Heart right ventricle (tissue), 16 donors: ENCODE measurements at regions of chr7 and their contacts with region 1.

Region 1: DNA sequence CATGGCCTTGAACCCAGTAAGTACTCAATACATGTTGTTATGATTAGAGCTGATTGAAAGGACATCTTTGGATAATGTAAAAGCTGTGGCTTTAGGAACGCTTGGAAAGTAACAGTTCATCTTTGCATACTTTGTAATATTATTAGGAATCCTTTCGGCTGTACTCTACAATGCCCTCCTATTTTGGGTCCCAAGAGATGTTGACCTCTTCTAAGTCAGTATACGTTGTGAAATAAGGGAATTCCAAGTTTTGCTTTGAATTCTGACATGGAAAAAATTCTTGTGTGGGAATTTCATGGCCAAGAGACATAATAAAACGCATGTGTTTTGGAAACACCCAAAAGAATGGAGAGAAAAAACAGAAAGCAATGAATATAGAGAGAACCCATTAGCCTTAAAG is 7.7 kb downstream of the AGR3 start:
- DNase-seq: no peak
- ATAC-seq: no peak
- H3K4me3 ChIP-seq: no peak overlapping the region
- H3K27ac ChIP-seq: no peak overlapping the region
- H3K4me1 ChIP-seq: no peaks in the 10 kb centered on the region
- H3K27me3 ChIP-seq: no peaks in the 10 kb centered on the region
- CTCF ChIP-seq: no peak

Region 2: DNA sequence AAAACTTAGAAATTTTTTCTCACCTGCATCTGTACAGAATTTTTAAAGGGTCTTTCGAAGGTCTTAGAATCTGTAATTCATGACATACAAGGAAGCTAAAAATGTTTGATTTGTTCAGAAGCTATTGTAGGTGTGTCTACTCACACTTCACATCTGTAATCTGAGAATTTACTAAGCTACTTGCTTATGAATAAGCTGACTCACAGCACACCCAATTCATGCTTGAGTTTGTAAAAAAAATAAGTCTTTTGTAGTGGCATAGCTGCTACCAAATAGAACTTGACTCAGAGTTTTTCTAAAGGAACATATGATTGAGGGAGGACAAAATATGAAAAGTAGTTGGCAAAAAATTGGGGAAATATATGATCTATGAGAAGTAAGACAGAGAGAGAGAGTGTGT is 56.5 kb before region 1 on chr7:
- intact Hi-C with region 1: no loop called
- DNase-seq: no peak
- ATAC-seq: no peak
- H3K4me3 ChIP-seq: no peak overlapping the region
- H3K27ac ChIP-seq: no peak overlapping the region
- H3K4me1 ChIP-seq: peaks cover 0 to 12% (median 0%) of the 10 kb centered on the region in 9 donors
- H3K27me3 ChIP-seq: no peaks in the 10 kb centered on the region
- CTCF ChIP-seq: no peak

Region 3: DNA sequence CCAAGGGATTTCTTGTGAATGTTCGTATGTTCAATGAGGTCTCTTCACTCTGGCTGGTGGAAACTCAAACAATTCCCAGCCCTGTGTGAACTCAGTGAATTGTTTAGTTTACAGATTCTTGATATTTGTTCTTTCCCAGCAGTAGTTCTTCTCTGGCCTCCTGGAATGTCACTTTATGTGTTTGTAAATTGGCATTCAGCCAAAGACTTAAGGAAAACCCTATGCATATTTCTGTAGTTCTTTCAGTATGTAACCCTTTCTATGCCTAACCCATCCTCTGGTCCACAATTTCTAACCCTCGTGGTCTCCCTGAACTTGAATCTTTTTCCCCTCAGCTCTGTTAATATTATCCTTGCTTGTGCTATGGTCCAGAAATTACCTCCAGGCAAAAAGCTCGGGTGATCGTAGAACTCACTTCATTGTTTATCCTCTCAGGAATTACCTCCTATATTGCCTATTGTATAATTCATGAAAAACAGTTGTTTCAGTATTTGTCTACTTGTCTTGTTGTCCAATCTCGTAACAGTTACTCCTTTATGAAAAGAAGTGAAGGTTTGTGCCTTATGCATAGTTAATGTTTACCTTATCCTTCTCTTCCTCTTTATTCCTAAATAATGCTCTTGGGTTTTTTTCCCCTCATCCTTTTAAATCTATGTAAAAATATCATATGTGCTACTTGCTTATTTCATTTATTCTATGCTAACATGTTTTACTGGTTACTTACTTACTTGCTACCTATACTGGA is 31.4 kb after region 1 on chr7:
- intact Hi-C with region 1: no loop called
- DNase-seq: no peak
- ATAC-seq: no peak
- H3K4me3 ChIP-seq: no peak overlapping the region
- H3K27ac ChIP-seq: no peak overlapping the region
- H3K4me1 ChIP-seq: no peaks in the 10 kb centered on the region
- H3K27me3 ChIP-seq: no peaks in the 10 kb centered on the region
- CTCF ChIP-seq: no peak

Region 4: GRCh38 chr7:16933296-16934279 is 59.5 kb after region 1 on chr7:
- intact Hi-C with region 1: loop called in 1 of 10 experiments (anchors 10 kb)
- DNase-seq: no peak
- ATAC-seq: peak in 3 of 8 donors; percentile 29 to 45 (median 38)
- H3K4me3 ChIP-seq: no peak overlapping the region
- H3K27ac ChIP-seq: no peak overlapping the region
- H3K4me1 ChIP-seq: peaks cover 0 to 31% (median 0%) of the 10 kb centered on the region in 9 donors
- H3K27me3 ChIP-seq: no peaks in the 10 kb centered on the region
- CTCF ChIP-seq: no peak

Region 5: GRCh38 chr7:17195576-17195975 is 321.5 kb after region 1 on chr7:
- intact Hi-C with region 1: no loop called
- DNase-seq: no peak
- ATAC-seq: no peak
- H3K4me3 ChIP-seq: no peak overlapping the region
- H3K27ac ChIP-seq: no peak overlapping the region
- H3K4me1 ChIP-seq: no peaks in the 10 kb centered on the region
- H3K27me3 ChIP-seq: no peaks in the 10 kb centered on the region
- CTCF ChIP-seq: no peak